Mammary epithelial cell (primary cell): ENCODE measurements at regions of chr1 and their contacts with region 1.

Region 1: DNA sequence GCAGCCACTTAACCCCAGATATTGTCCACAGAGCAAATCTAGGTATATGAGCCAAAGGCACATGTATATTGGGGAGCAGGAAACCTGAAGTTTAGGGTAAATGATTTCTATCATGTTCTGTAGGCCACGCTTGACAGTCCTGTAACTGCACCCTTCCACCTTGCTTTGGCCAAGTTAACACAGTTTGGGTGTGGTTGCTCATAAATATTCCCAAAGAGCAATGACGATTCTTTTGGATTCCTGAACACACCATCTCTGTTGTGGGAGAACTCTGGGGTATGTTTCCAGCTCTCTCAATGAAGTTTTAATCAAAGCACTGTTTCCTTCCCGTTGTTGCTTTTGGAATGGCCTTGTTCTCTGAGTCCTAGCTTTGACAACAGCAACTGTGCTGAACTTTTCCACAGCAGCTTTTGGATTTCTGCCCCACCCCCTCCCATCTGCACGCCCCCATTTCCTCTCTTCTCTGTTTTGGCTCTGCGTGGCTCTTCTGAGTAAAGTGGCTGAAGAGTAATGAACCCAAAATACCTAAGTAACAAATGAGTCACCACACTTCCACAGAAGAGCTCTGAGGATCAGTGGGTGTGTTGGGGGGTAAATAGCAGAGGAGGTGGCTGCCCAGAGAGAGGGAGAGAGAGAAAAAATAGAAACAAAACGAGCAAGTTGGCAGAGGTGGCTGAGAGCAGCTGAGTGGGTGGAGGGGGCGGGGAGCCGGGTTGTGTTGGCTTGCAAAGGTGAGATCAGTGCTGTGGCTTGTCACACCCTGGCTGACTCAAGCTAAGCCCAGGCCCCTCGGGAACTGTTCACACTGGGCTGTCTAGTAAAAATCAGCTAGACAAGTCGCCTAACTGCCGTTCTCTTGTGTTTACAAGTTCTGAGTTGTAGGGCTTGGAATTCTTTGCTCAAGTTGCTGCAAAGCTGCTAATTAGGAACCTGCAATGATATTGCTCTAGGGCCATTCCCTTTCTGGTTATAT is 26.9 kb upstream of the RAP1A start:
- DNase-seq: peak; percentile 96
- H3K4me3 ChIP-seq: no peak overlapping the region
- H3K27ac ChIP-seq: peak overlapping the region; percentile 28
- H3K4me1 ChIP-seq: peaks cover 22% of the 10 kb centered on the region
- H3K27me3 ChIP-seq: no peaks in the 10 kb centered on the region
- CTCF ChIP-seq: no peak

Region 2: DNA sequence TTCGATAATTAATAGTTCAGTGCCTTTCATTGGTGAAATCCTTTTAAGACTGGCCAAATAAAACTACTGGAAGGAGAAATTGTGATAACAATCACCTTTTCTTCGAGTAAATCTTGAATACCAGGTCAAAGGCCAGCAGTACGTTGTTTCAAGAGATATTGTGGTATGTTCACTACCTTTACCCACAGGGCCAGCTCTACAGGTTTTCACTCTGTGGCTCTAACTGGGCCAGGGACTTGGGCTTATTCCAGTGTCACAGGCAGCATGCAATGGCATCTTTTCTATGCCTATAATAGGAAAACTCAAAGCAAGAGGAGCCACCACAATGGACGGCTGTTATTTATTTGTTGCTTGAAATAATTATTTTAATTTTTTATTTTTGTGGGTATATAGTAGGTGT is 602.1 kb before region 1 on chr1:
- CTCF ChIA-PET with region 1: no interaction called
- dilution Hi-C with region 1: no loop called
- in situ Hi-C with region 1: no loop called
- intact Hi-C with region 1: no loop called
- DNase-seq: no peak
- H3K4me3 ChIP-seq: no peak overlapping the region
- H3K27ac ChIP-seq: no peak overlapping the region
- H3K4me1 ChIP-seq: peaks cover 11% of the 10 kb centered on the region
- H3K27me3 ChIP-seq: peaks cover 5% of the 10 kb centered on the region
- CTCF ChIP-seq: no peak

Region 3: GRCh38 chr1:111436726-111437125 is 155.9 kb before region 1 on chr1:
- CTCF ChIA-PET with region 1: no interaction called
- dilution Hi-C with region 1: no loop called
- in situ Hi-C with region 1: no loop called
- intact Hi-C with region 1: no loop called
- DNase-seq: no peak
- H3K4me3 ChIP-seq: no peak overlapping the region
- H3K27ac ChIP-seq: no peak overlapping the region
- H3K4me1 ChIP-seq: no peaks in the 10 kb centered on the region
- H3K27me3 ChIP-seq: no peaks in the 10 kb centered on the region
- CTCF ChIP-seq: no peak

Region 4: GRCh38 chr1:111553196-111553595 is 39.5 kb before region 1 on chr1:
- CTCF ChIA-PET with region 1: no interaction called
- dilution Hi-C with region 1: no loop called
- in situ Hi-C with region 1: no loop called
- intact Hi-C with region 1: loop called (anchors 2 kb)
- DNase-seq: peak; percentile 80
- H3K4me3 ChIP-seq: no peak overlapping the region
- H3K27ac ChIP-seq: no peak overlapping the region
- H3K4me1 ChIP-seq: peaks cover 16% of the 10 kb centered on the region
- H3K27me3 ChIP-seq: no peaks in the 10 kb centered on the region
- CTCF ChIP-seq: no peak

Region 5: GRCh38 chr1:111619635-111620440 is 27.2 kb after region 1 on chr1 and contains the start of gene RAP1A:
- CTCF ChIA-PET with region 1: no interaction called
- dilution Hi-C with region 1: no loop called
- in situ Hi-C with region 1: no loop called
- intact Hi-C with region 1: loop called (anchors 2 kb)
- DNase-seq: peak; percentile 86
- H3K4me3 ChIP-seq: peak within 1 kb of the TSS; percentile 51 to 89 (median 83)
- H3K27ac ChIP-seq: peak within 1 kb of the TSS; percentile 42
- H3K4me1 ChIP-seq: peaks cover 6% of the 10 kb centered on the region
- H3K27me3 ChIP-seq: no peaks in the 10 kb centered on the region
- CTCF ChIP-seq: no peak
- total RNA-seq, gene RAP1A: 20.8 to 58.8 TPM

Region 6: GRCh38 chr1:111633736-111634247 is 41.1 kb after region 1 on chr1:
- CTCF ChIA-PET with region 1: no interaction called
- dilution Hi-C with region 1: no loop called
- in situ Hi-C with region 1: no loop called
- intact Hi-C with region 1: no loop called
- DNase-seq: no peak
- H3K4me3 ChIP-seq: no peak overlapping the region
- H3K27ac ChIP-seq: no peak overlapping the region
- H3K4me1 ChIP-seq: no peaks in the 10 kb centered on the region
- H3K27me3 ChIP-seq: no peaks in the 10 kb centered on the region
- CTCF ChIP-seq: no peak